HEK293 (cell line): ENCODE measurements at regions of chr2 and their contacts with region 1.

Region 1: GRCh38 chr2:72862239-72862988 is 24.8 kb upstream of the SPR start:
- H3K4me3 ChIP-seq: peak overlapping the region; percentile 36
- H3K27ac ChIP-seq: no peak overlapping the region
- H3K4me1 ChIP-seq: no peaks in the 10 kb centered on the region
- CTCF ChIP-seq: peak; percentile 98

Region 2: GRCh38 chr2:72554381-72554780 is 308.0 kb before region 1 on chr2:
- CTCF ChIA-PET with region 1: no interaction called
- POLR2A ChIA-PET with region 1: no interaction called
- H3K4me3 ChIP-seq: no peak overlapping the region
- H3K27ac ChIP-seq: no peak overlapping the region
- H3K4me1 ChIP-seq: no peaks in the 10 kb centered on the region
- CTCF ChIP-seq: no peak

Region 3: DNA sequence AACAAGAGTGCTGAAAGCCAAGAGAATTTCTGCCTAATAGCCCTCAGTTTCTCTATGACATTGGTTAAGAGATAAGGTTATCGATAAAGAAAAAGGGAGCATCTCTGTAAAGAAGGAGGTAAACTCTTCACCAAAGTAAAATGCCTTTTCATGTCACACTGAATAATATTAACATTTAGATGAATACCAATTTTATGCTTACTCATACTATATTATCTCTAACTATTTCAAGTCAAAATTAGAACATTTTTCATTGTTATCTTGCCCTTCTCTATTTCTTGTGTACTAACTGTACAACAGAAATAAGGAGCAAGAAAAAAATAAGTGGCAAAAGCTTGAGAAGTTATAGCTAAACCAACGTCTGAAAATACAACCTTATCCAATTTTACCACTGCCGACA is 164.1 kb before region 1 on chr2:
- CTCF ChIA-PET with region 1: no interaction called
- POLR2A ChIA-PET with region 1: no interaction called
- H3K4me3 ChIP-seq: no peak overlapping the region
- H3K27ac ChIP-seq: no peak overlapping the region
- H3K4me1 ChIP-seq: peaks cover 15% of the 10 kb centered on the region
- CTCF ChIP-seq: no peak

Region 4: DNA sequence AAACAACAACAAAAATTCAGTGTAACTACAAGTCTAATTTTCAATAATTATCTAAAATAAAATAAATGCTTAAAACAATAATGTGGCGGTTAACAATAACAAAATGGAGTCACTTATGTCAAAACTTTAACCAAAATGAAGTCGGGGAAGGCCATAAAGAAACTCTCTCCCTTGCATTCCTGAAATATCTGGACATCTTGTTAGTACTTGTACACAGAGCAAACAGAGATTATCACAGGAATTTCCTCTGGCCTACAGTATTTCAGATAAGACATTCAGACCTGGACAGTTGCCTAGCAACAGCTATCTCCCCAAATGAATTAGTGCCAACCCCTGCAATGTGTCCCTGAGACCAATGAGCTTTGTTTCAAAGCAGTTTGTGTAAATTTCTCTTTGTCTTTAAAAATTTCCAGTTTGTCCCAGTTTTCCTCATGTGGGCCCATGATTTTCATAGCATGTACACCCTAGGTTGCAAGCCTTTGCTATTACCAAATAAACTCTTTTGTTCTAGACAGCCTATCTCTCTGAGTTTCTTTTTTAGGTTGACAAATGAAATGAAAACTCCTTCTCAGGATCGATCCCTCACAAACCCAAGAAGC is 105.1 kb before region 1 on chr2:
- CTCF ChIA-PET with region 1: interaction called, 10 read pairs
- POLR2A ChIA-PET with region 1: no interaction called
- H3K4me3 ChIP-seq: no peak overlapping the region
- H3K27ac ChIP-seq: no peak overlapping the region
- H3K4me1 ChIP-seq: peaks cover 15% of the 10 kb centered on the region; the same call in 1 of the 2 replicates
- CTCF ChIP-seq: no peak

Region 5: GRCh38 chr2:72770879-72771461 is 91.4 kb before region 1 on chr2:
- CTCF ChIA-PET with region 1: interaction called, 72 read pairs
- POLR2A ChIA-PET with region 1: no interaction called
- H3K4me3 ChIP-seq: no peak overlapping the region
- H3K27ac ChIP-seq: no peak overlapping the region
- H3K4me1 ChIP-seq: no peaks in the 10 kb centered on the region
- CTCF ChIP-seq: peak; percentile 66

Region 6: GRCh38 chr2:72780477-72780876 is 81.9 kb before region 1 on chr2:
- CTCF ChIA-PET with region 1: interaction called, 10 read pairs
- POLR2A ChIA-PET with region 1: no interaction called
- H3K4me3 ChIP-seq: no peak overlapping the region
- H3K27ac ChIP-seq: no peak overlapping the region
- H3K4me1 ChIP-seq: peaks cover 13% of the 10 kb centered on the region
- CTCF ChIP-seq: no peak

Region 7: DNA sequence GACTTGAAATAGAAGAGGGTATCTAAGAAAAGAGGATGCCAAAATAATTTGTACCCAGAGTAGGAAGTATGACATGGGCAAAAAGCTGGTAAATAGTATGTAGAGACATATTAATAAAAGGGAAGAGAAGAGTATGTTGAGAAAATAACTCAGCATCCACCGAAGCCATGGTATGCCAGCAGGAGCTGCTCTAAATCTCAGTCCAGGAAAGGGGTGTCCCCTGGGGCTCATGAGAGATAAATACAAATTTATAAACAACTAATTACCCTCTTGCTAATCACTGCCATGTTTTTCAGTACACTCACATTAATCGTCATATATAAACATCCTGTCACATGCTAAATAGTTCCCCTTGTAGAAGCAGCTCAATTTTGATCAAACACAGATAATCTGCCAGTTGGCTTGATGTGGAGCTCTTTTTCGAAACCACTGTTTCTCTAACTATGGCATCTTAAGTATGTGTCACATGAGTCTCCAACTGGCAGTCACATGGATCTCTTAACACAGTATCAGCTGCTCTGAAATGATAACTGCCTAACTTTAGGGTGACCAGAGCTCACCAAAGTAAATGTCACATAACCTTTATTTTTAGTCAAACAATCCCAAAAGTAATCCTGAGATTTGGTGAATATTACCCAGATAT is 68.5 kb before region 1 on chr2:
- CTCF ChIA-PET with region 1: interaction called, 11 read pairs
- POLR2A ChIA-PET with region 1: no interaction called
- H3K4me3 ChIP-seq: no peak overlapping the region
- H3K27ac ChIP-seq: no peak overlapping the region
- H3K4me1 ChIP-seq: no peaks in the 10 kb centered on the region
- CTCF ChIP-seq: no peak

Region 8: DNA sequence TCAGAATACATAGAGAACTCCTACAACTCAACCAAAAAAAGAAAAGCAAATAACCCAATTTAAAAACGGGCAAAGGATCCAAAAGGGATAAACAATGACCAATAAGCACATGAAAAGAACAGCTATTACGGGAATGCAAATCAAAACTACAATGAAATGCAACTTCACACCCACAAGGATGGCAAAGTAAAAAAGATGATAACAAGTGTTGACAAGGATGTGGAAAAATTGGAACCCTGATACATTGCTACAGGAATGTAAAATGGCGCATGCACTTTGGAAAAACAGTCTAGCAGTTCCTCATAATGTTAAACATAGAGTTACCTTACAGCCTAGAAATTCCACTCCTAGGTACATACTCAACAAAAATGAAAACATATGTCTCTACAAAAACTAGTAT is 41.3 kb before region 1 on chr2:
- CTCF ChIA-PET with region 1: interaction called, 10 read pairs
- POLR2A ChIA-PET with region 1: no interaction called
- H3K4me3 ChIP-seq: no peak overlapping the region
- H3K27ac ChIP-seq: no peak overlapping the region
- H3K4me1 ChIP-seq: peaks cover 7% of the 10 kb centered on the region; the same call in 1 of the 2 replicates
- CTCF ChIP-seq: no peak

Region 9: GRCh38 chr2:72837171-72837570 is 25.2 kb before region 1 on chr2:
- CTCF ChIA-PET with region 1: interaction called, 12 read pairs
- POLR2A ChIA-PET with region 1: no interaction called
- H3K4me3 ChIP-seq: no peak overlapping the region
- H3K27ac ChIP-seq: no peak overlapping the region
- H3K4me1 ChIP-seq: no peaks in the 10 kb centered on the region
- CTCF ChIP-seq: no peak